Ascending aorta (tissue), 2 donors: ENCODE measurements at regions of chr18 and their contacts with region 1.

Region 1: GRCh38 chr18:4433717-4434116 is 21.4 kb downstream of the DLGAP1 start:
- DNase-seq: no peak
- H3K4me3 ChIP-seq: no peak overlapping the region
- H3K27ac ChIP-seq: no peak overlapping the region
- H3K4me1 ChIP-seq: no peaks in the 10 kb centered on the region
- H3K27me3 ChIP-seq: no peaks in the 10 kb centered on the region
- CTCF ChIP-seq: no peak

Region 2: DNA sequence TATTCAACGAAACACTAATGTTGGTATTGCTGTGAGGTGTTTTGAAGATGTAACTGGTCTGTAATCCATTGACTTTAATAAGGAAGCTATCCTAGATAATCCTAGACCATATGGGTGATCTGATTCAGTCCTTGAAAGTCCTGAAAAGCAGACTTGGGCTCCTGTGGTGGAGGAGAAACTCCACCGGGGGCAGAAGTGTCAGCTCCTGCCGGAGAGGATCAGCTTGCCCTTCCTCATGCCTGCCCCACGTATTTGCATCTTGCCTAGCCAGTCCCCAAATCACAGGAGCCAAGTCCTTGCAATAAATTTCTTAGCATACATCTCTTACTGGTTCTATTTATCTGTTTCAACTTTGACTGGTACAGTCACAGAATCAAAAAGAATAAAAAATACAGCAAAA is 165.6 kb after region 1 on chr18:
- intact Hi-C with region 1: loop called (anchors 5 kb)
- DNase-seq: no peak
- H3K4me3 ChIP-seq: no peak overlapping the region
- H3K27ac ChIP-seq: no peak overlapping the region
- H3K4me1 ChIP-seq: no peaks in the 10 kb centered on the region
- H3K27me3 ChIP-seq: no peaks in the 10 kb centered on the region
- CTCF ChIP-seq: no peak